IMR-90 (cell line): ENCODE measurements at regions of chr19 and their contacts with region 1.

Region 1: DNA sequence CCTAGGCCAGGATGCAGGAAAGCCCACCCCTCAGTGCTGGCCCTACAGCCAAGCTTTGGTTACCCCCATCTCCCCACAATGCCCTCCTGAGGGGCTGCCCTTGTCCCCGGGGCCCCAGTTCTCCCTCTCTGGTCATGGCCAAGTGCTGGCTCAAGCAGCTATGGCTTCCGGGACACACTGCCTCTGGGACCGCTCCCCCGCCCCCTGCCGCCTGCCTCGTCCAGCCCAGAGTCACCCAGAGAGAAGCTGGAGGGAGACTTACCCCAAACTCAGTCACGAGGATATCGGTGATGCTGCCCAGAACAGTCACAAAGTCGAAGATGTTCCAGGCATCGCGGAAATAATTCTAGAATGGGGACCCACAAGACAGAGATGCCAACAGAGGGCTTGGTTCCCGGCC is 94.7 kb downstream of the IER2 start:
- DNase-seq: no peak
- ATAC-seq: no peak
- H3K4me3 ChIP-seq: no peak overlapping the region
- H3K27ac ChIP-seq: no peak overlapping the region
- H3K4me1 ChIP-seq: no peaks in the 10 kb centered on the region
- H3K27me3 ChIP-seq: no peaks in the 10 kb centered on the region; the same call in 1 of the 2 replicates
- CTCF ChIP-seq: no peak
- POLR2A ChIP-seq: no peak
- RAD21 ChIP-seq: no peak

Region 2: GRCh38 chr19:13176345-13176744 is 68.6 kb before region 1 on chr19:
- CTCF ChIA-PET with region 1: no interaction called
- POLR2A ChIA-PET with region 1: interaction called, 15 read pairs
- dilution Hi-C with region 1: no loop called
- in situ Hi-C with region 1: no loop called
- intact Hi-C with region 1: no loop called
- DNase-seq: no peak
- ATAC-seq: no peak
- H3K4me3 ChIP-seq: no peak overlapping the region
- H3K27ac ChIP-seq: no peak overlapping the region
- H3K4me1 ChIP-seq: peaks cover 11% of the 10 kb centered on the region
- H3K27me3 ChIP-seq: no peaks in the 10 kb centered on the region
- CTCF ChIP-seq: no peak
- POLR2A ChIP-seq: no peak
- RAD21 ChIP-seq: no peak